ENCODE measurements at regions of chr4 and their contacts with region 1.

Region 1: DNA sequence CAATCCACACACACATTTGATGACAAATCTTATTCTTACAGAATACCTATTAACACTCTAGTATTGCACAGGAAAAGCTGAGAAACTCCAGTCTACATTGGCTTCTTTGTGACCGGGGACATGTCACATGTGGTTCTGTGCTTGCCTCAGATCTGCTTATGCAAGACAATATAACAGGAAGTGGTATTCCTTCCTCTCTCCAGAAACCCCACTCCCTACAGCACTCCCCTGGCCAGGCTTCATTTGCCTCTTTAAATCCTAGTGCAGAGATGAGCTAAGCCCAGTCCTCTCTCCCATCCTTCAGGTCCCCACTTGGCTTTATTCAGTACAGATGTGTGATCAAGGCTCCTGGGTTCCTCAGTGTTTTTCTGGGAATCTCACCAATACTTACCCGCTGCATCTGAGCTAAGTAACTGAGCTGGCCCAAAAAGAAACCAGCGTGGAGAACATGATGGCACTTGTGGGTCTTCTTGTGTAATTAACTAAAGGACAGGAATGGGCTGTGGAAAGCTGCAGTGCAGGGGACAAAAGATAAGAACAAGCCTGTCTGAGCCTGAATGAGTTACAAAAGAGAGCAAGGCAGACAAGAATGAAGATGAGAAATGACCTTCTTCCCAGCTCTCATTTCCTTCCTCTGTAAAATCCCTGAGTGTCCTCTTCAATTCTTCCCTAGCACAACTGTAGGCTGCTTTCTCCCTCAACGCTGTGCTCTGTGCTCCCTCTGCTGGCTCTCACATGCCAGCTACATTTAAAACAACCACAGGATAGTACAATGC is 105.6 kb downstream of the HNRNPD start:
- DNase-seq: peak in 7 of 9 donors; percentile 25 to 60 (median 50)
- ATAC-seq: peak; percentile 97
- H3K4me3 ChIP-seq: no peak overlapping the region
- H3K4me3 Mint-ChIP-seq: peak overlapping the region in 8 of 10 donors; percentile 25 to 54 (median 36)
- H3K27ac ChIP-seq: no peak overlapping the region
- H3K27ac Mint-ChIP-seq: peak overlapping the region in 3 of 9 donors; percentile 25 to 79 (median 56)
- H3K4me1 ChIP-seq: peaks cover 0 to 8% of the 10 kb centered on the region in 2 donors
- H3K4me1 Mint-ChIP-seq: peaks cover 11 to 47% (median 28%) of the 10 kb centered on the region in 7 donors
- H3K27me3 ChIP-seq: no peaks in the 10 kb centered on the region
- H3K27me3 Mint-ChIP-seq: peaks cover 0 to 16% (median 0%) of the 10 kb centered on the region in 5 donors

Region 2: GRCh38 chr4:81913427-81913879 is 354.8 kb before region 1 on chr4:
- CTCF ChIA-PET with region 1: interaction called, 3 read pairs
- POLR2A ChIA-PET with region 1: no interaction called
- intact Hi-C with region 1: loop called (anchors 1 kb)
- DNase-seq: peak; percentile 18 to 64 (median 58)
- ATAC-seq: peak; percentile 81
- H3K4me3 ChIP-seq: no peak overlapping the region
- H3K4me3 Mint-ChIP-seq: peak overlapping the region in 1 of 10 donors; percentile 4
- H3K27ac ChIP-seq: no peak overlapping the region
- H3K27ac Mint-ChIP-seq: no peak overlapping the region
- H3K4me1 ChIP-seq: no peaks in the 10 kb centered on the region
- H3K4me1 Mint-ChIP-seq: peaks cover 0 to 9% (median 8%) of the 10 kb centered on the region in 7 donors
- H3K27me3 ChIP-seq: no peaks in the 10 kb centered on the region
- H3K27me3 Mint-ChIP-seq: peaks cover 0 to 20% (median 7%) of the 10 kb centered on the region in 5 donors

Region 3: DNA sequence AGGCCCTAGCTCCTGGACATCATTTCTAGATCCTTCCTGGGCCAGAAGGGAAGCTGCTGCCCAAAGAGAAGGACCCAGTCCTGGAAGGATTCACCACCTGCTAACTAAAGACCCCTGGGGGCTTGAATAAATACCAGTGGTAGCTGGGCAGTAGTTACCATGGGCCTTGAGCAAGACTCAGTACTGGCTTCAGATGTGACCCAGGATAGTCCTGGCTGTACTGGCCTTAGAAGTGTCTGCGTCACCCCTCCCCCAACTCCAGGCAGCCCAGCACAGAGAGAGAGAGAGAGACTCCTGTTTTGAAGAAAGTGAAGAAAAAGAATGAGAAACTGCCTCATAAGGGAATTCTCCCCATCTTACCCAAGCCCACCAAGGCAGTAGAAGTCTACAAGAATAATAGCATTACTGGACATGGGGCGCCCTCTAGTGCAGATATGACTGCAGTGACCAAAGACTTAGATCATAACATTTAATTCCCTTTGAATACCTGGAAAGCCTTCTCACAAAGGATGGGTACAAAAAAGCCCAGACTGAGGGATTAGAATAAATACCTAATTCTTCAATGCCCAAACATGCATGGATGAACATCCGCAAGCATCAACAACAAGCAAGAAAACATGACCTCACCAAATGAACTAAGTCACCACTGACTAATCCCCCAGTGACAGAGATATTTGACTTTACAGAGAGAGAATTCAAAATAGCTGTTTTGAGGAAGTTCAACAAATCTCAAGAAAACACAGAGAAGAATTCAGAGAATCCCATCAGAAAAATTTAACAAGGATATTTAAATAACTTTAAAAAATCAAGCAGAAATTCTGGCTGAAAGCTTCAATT is 66.2 kb before region 1 on chr4:
- CTCF ChIA-PET with region 1: interaction called, 4 read pairs
- POLR2A ChIA-PET with region 1: no interaction called
- intact Hi-C with region 1: loop called (anchors 1 to 5 kb)
- DNase-seq: peak in 7 of 9 donors; percentile 30 to 54 (median 40)
- ATAC-seq: peak; percentile 70
- H3K4me3 ChIP-seq: no peak overlapping the region
- H3K4me3 Mint-ChIP-seq: no peak overlapping the region
- H3K27ac ChIP-seq: no peak overlapping the region
- H3K27ac Mint-ChIP-seq: no peak overlapping the region
- H3K4me1 ChIP-seq: no peaks in the 10 kb centered on the region
- H3K4me1 Mint-ChIP-seq: peaks cover 0 to 17% (median 3%) of the 10 kb centered on the region in 7 donors
- H3K27me3 ChIP-seq: peaks cover 0 to 4% of the 10 kb centered on the region in 2 donors
- H3K27me3 Mint-ChIP-seq: peaks cover 0 to 18% (median 0%) of the 10 kb centered on the region in 5 donors

Region 4: GRCh38 chr4:82284858-82285805 is 16.9 kb after region 1 on chr4:
- CTCF ChIA-PET with region 1: interaction called, 6 read pairs
- POLR2A ChIA-PET with region 1: no interaction called
- intact Hi-C with region 1: loop called in 1 of 2 experiments (anchors 1 kb)
- DNase-seq: peak; percentile 97 to 100 (median 99)
- ATAC-seq: peak; percentile 94
- H3K4me3 ChIP-seq: peak overlapping the region; percentile 55
- H3K4me3 Mint-ChIP-seq: peak overlapping the region; percentile 70 to 91 (median 86)
- H3K27ac ChIP-seq: peak overlapping the region; percentile 71
- H3K27ac Mint-ChIP-seq: peak overlapping the region; percentile 53 to 94 (median 83)
- H3K4me1 ChIP-seq: peaks cover 4 to 11% of the 10 kb centered on the region in 2 donors
- H3K4me1 Mint-ChIP-seq: peaks cover 9 to 22% (median 13%) of the 10 kb centered on the region in 7 donors
- H3K27me3 ChIP-seq: no peaks in the 10 kb centered on the region
- H3K27me3 Mint-ChIP-seq: peaks cover 0 to 28% (median 0%) of the 10 kb centered on the region in 5 donors

Region 5: GRCh38 chr4:82450966-82451755 is 182.9 kb after region 1 on chr4:
- CTCF ChIA-PET with region 1: no interaction called
- POLR2A ChIA-PET with region 1: no interaction called
- intact Hi-C with region 1: no loop called
- DNase-seq: no peak
- ATAC-seq: no peak
- H3K4me3 ChIP-seq: no peak overlapping the region
- H3K4me3 Mint-ChIP-seq: no peak overlapping the region
- H3K27ac ChIP-seq: no peak overlapping the region
- H3K27ac Mint-ChIP-seq: no peak overlapping the region
- H3K4me1 ChIP-seq: no peaks in the 10 kb centered on the region
- H3K4me1 Mint-ChIP-seq: peaks cover 0 to 17% (median 11%) of the 10 kb centered on the region in 7 donors
- H3K27me3 ChIP-seq: no peaks in the 10 kb centered on the region
- H3K27me3 Mint-ChIP-seq: no peaks in the 10 kb centered on the region

Measured in naive thymus-derived CD4-positive, alpha-beta T cell (primary cell).